ENCODE measurements at regions of chr22 and their contacts with region 1.

Region 1: DNA sequence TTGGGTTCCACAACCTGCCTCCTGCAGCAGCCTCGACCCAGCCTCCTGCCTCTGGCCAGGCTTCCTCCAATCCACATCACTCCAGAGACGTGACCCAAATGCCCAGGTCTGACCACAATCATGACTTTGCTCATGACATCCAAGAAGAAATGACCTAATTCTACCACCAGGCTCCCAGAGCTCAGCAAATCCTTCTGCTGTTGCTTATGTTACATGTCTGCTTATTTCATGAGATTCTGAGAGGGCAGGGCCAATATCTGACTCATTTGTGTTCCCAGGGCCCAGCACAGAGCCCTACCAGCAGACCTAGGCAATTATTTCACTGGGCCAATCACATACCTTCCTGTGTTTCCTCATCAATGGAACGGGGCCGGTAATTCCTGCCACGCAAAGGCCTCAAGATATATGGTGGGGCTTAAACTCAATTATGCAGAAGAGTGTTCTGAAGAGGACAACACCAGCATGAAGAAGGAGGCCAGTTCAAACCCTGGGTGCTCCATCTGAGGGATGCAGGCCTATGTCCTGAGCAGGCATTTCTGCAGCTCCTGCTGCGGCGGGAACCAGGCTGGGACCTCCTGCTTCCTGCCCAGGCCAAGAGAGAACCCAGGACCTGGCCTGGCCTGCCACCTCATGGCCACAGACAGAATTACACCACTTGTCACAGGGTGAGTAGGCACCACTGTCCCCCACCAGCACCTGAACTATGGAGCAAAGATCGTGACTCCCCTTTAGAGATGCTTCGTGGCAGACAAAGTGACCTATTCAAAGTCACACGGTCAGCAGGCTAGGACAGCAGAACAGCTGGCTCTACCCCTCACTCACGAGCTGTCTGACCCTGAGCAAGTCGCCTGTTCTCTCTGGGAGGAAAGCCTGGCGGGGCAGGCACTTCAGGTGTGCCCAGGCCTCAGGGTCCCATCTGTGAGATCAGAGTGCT is 5.9 kb downstream of the CENPM start:
- DNase-seq: peak; percentile 90 to 92
- ATAC-seq: peak; percentile 92
- H3K4me3 ChIP-seq: no peak overlapping the region
- H3K27ac ChIP-seq: no peak overlapping the region
- H3K4me1 ChIP-seq: no peaks in the 10 kb centered on the region
- H3K27me3 ChIP-seq: no peaks in the 10 kb centered on the region

Region 2: GRCh38 chr22:41697126-41697775 is 243.8 kb before region 1 on chr22:
- intact Hi-C with region 1: loop called (anchors 2 kb)
- DNase-seq: peak; percentile 95 to 99
- ATAC-seq: peak; percentile 87
- H3K4me3 ChIP-seq: no peak overlapping the region
- H3K27ac ChIP-seq: no peak overlapping the region
- H3K4me1 ChIP-seq: no peaks in the 10 kb centered on the region
- H3K27me3 ChIP-seq: no peaks in the 10 kb centered on the region

Region 3: DNA sequence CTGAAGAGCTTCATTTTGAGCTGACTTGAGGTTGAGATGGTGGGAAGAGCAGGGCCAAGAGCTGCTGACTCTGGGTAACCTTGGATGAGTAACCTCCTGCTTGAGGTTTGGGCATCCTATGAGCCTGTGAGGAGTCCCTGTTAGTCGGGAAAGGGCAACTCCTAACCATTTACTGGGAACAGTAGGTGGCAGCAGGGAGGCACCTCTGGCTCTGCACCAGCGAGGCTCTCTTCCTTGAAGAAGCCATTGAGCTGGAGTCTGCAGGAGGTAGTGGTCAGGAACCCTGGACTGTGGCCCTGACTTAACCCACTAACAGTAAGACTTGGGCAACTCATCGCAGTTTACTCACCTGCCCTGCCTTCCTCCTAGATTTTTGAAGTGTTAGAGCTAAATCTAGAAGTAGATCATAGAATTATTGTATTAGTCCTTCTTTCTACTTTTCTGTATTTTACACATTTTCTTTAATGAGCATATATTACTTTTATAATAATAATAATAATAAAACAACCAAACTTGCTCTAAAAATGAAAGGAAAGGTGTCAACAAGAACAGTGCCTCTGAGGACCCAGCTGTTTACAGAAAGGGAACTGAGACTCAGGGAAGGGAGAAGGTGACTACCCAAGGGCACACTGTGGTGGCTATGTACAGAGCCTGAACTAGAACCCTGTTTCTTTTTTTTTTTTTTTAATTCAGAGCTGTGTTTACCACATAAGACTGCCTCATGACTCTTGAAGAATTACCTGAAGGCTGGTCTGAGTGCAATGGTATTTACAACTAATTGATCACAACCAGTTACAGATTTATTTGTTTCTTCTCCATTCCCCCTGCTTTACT is 194.3 kb before region 1 on chr22:
- intact Hi-C with region 1: loop called (anchors 2 kb)
- DNase-seq: peak; percentile 70 to 79
- ATAC-seq: peak; percentile 76
- H3K4me3 ChIP-seq: no peak overlapping the region
- H3K27ac ChIP-seq: no peak overlapping the region
- H3K4me1 ChIP-seq: no peaks in the 10 kb centered on the region
- H3K27me3 ChIP-seq: no peaks in the 10 kb centered on the region

Region 4: GRCh38 chr22:41822317-41823060 is 118.6 kb before region 1 on chr22:
- intact Hi-C with region 1: loop called (anchors 5 kb)
- DNase-seq: no peak
- ATAC-seq: no peak
- H3K4me3 ChIP-seq: no peak overlapping the region
- H3K27ac ChIP-seq: no peak overlapping the region
- H3K4me1 ChIP-seq: no peaks in the 10 kb centered on the region
- H3K27me3 ChIP-seq: no peaks in the 10 kb centered on the region

Measured in aorta (tissue), 5 donors.